HCT116 (cell line): ENCODE measurements at regions of chr6 and their contacts with region 1.

Region 1: GRCh38 chr6:6131492-6132109 is 124.9 kb upstream of the NRN1 start:
- DNase-seq: peak; percentile 10
- ATAC-seq: peak; percentile 64; the same call in 1 of the 2 replicates
- H3K4me3 ChIP-seq: no peak overlapping the region
- H3K27ac ChIP-seq: no peak overlapping the region
- H3K4me1 ChIP-seq: no peaks in the 10 kb centered on the region
- H3K27me3 ChIP-seq: peaks cover 17% of the 10 kb centered on the region
- CTCF ChIP-seq: peak; percentile 36 to 70 (median 51); a peak in 5 of 6 replicates
- POLR2A ChIP-seq: no peak
- RAD21 ChIP-seq: peak; percentile 52

Region 2: GRCh38 chr6:5422321-5422915 is 709.2 kb before region 1 on chr6:
- CTCF ChIA-PET with region 1: interaction called, 3 read pairs
- POLR2A ChIA-PET with region 1: no interaction called
- RAD21 ChIA-PET with region 1: no interaction called
- intact Hi-C with region 1: loop called (anchors 2 kb)
- DNase-seq: peak; percentile 7
- ATAC-seq: peak; percentile 91
- H3K4me3 ChIP-seq: no peak overlapping the region
- H3K27ac ChIP-seq: no peak overlapping the region
- H3K4me1 ChIP-seq: no peaks in the 10 kb centered on the region
- H3K27me3 ChIP-seq: no peaks in the 10 kb centered on the region
- CTCF ChIP-seq: peak; percentile 36 to 54 (median 47); a peak in 5 of 6 replicates
- POLR2A ChIP-seq: no peak
- RAD21 ChIP-seq: peak; percentile 76

Region 3: GRCh38 chr6:6486595-6486994 is 355.0 kb after region 1 on chr6:
- CTCF ChIA-PET with region 1: no interaction called
- POLR2A ChIA-PET with region 1: no interaction called
- RAD21 ChIA-PET with region 1: no interaction called
- intact Hi-C with region 1: no loop called
- DNase-seq: no peak
- ATAC-seq: no peak
- H3K4me3 ChIP-seq: no peak overlapping the region
- H3K27ac ChIP-seq: no peak overlapping the region
- H3K4me1 ChIP-seq: no peaks in the 10 kb centered on the region
- H3K27me3 ChIP-seq: peaks cover 41% of the 10 kb centered on the region
- CTCF ChIP-seq: no peak
- POLR2A ChIP-seq: no peak
- RAD21 ChIP-seq: no peak

Region 4: GRCh38 chr6:7073821-7074525 is 942.4 kb after region 1 on chr6:
- CTCF ChIA-PET with region 1: no interaction called
- POLR2A ChIA-PET with region 1: no interaction called
- RAD21 ChIA-PET with region 1: no interaction called
- intact Hi-C with region 1: no loop called
- DNase-seq: no peak
- ATAC-seq: no peak
- H3K4me3 ChIP-seq: no peak overlapping the region
- H3K27ac ChIP-seq: no peak overlapping the region
- H3K4me1 ChIP-seq: peaks cover 4 to 5% of the 10 kb centered on the region in 2 experiments; a peak in 3 of 4 replicates
- H3K27me3 ChIP-seq: no peaks in the 10 kb centered on the region
- CTCF ChIP-seq: no peak
- POLR2A ChIP-seq: no peak
- RAD21 ChIP-seq: no peak